HCT116 (cell line): ENCODE measurements at regions of chr7 and their contacts with region 1.

Region 1: DNA sequence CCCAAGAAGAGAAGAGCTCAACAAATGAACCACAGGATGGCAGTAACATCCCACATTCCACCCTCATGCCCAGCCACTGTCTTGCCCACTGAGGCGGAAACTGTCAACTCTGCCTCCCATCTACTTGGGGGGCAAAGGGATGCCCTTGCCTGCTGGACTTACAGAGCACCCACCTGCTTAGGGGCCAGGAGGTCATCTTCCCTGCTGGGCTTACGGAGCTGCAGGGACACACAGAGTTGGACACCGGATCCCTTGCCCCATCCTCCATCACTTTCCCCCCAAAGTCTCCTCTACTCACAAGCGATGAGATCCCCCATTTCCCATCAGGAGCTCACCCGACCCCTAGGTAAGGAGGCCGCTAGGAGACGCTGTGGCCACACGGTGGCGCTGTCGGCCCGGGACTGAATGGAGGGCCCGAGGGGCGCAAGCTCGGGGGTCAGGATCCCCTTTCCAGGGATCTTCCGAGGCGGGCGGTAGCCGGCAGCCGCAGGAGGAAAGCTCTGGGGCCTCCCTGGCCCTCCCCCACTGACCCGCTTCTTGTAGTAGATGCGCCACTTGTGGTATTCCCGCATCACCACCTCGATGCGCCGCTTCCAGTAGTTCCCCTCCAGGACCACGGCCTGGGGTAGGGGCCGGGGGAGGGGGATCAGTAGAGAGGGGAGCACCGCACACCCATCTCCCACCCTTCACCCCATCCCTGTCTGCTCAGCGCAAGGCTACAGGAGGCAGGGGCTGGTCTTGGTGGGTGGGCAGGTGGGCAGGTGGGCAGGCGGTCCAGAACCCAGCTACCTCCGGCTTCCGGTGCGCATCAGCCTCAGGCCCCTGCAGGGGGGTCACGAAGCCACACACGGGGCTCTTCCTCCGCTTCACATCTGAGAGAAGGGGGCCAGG is 17.3 kb downstream of the MLXIPL start:
- DNase-seq: no peak
- ATAC-seq: peak; percentile 71
- H3K4me3 ChIP-seq: no peak overlapping the region
- H3K27ac ChIP-seq: no peak overlapping the region
- H3K4me1 ChIP-seq: peaks cover 16 to 40% of the 10 kb centered on the region in 2 experiments
- H3K27me3 ChIP-seq: no peaks in the 10 kb centered on the region
- CTCF ChIP-seq: peak; percentile 89 to 99 (median 94)
- POLR2A ChIP-seq: no peak
- RAD21 ChIP-seq: peak; percentile 93

Region 2: DNA sequence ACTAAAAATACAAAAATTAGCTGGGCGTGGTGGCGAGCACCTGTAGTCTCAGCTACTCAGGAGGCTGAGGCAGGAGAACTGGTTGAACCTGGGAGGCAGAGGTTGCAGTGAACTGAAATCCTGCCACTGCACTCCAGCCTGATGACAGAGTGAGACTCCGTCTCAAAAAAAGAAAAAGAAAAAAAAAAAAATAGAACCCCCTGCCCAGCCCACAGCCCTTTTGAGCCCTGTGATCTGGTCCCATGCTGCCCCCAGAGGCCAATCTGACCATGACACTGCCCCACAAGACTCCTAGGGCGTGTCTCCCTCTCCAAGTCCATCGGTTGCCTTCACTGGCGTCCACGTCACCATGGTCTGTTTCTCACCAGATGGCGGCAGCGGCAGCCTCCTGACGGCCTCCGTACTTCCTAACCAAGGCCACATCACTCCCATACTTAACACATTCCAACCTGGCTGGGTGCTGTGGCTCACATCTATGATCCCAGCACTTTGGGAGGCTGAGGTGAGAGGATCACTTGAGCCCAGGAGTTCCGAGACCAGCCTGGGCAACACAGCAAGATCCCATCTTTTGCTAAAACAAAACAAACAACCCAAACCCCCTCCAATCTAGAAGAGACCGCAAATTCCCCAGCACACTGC is 94.4 kb after region 1 on chr7:
- CTCF ChIA-PET with region 1: interaction called, 14 read pairs
- POLR2A ChIA-PET with region 1: no interaction called
- RAD21 ChIA-PET with region 1: interaction called in 1 of 2 experiments, 4 read pairs
- intact Hi-C with region 1: loop called (anchors 1 kb)
- DNase-seq: peak; percentile 68
- ATAC-seq: peak; percentile 66
- H3K4me3 ChIP-seq: no peak overlapping the region
- H3K27ac ChIP-seq: peak overlapping the region; percentile 27; the same call in 1 of the 2 replicates
- H3K4me1 ChIP-seq: peaks cover 15 to 39% of the 10 kb centered on the region in 2 experiments
- H3K27me3 ChIP-seq: no peaks in the 10 kb centered on the region
- CTCF ChIP-seq: peak in 2 of 3 experiments; percentile 61 to 77; a peak in 4 of 6 replicates
- POLR2A ChIP-seq: no peak
- RAD21 ChIP-seq: no peak

Region 3: DNA sequence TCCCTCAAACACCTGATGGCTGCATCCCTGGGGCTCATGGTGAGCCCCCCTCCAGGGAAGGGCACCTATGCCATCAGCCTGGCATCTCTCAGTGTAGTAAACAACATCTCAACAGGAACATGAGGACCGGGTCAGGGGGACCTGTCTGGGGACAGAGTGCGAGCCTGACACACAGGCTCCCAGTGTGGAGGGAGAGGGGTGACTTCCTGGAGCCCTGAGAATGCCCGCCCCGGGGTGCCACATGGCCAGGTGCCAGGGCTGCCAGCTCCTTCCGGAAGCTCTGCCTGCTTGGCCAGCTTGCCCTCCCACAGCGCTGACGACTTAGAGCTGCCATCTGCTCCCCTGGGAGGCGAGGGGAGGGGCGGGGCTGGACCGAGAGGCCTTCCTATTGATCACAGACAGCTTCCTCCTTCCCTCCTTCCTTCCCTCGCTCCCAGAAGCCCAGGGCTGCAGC is 100.1 kb after region 1 on chr7:
- CTCF ChIA-PET with region 1: interaction called, 14 read pairs
- POLR2A ChIA-PET with region 1: no interaction called
- RAD21 ChIA-PET with region 1: interaction called in 1 of 2 experiments, 4 read pairs
- intact Hi-C with region 1: no loop called
- DNase-seq: peak; percentile 69
- ATAC-seq: peak; percentile 72
- H3K4me3 ChIP-seq: peak overlapping the region; percentile 13 to 31; a peak in 3 of 4 replicates
- H3K27ac ChIP-seq: peak overlapping the region; percentile 92
- H3K4me1 ChIP-seq: peaks cover 40 to 71% of the 10 kb centered on the region in 2 experiments
- H3K27me3 ChIP-seq: no peaks in the 10 kb centered on the region
- CTCF ChIP-seq: no peak
- POLR2A ChIP-seq: no peak
- RAD21 ChIP-seq: no peak